Upper lobe of right lung (tissue), 1 donor: ENCODE measurements at regions of chr9 and their contacts with region 1.

Region 1: DNA sequence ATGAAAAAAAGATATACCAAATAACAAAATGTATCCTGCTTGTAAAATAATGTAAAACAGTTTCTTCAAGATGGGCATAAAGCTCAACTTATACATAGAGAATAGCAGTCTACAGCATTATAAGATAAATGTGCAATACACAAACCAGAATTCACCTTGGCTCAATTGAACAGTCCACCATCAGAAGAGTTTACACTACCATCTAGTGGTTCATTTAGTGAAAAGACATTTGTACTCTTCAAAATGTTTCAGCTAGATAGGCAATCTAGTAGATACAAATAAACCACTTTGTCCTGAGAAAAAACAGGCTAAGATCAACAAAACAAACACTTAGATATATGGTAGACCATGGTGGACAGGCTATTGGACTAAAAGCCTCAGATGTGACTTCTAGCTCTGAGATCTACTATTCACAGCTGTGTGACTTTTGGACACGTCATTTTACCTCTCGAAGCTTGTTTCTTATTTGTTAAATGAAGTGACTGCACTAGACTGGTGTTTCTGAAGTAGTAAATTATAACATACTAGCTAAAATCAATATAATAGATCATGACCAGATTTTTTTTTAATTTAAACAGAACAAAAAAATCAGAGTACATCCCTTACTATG is 22.1 kb upstream of the TPD52L3 start:
- DNase-seq: no peak
- ATAC-seq: peak; percentile 77
- H3K4me3 ChIP-seq: no peak overlapping the region
- H3K27ac ChIP-seq: no peak overlapping the region
- H3K4me1 ChIP-seq: no peaks in the 10 kb centered on the region
- H3K27me3 ChIP-seq: no peaks in the 10 kb centered on the region
- CTCF ChIP-seq: peak; percentile 59

Region 2: GRCh38 chr9:6090317-6090716 is 215.7 kb before region 1 on chr9:
- intact Hi-C with region 1: no loop called
- DNase-seq: no peak
- ATAC-seq: no peak
- H3K4me3 ChIP-seq: no peak overlapping the region
- H3K27ac ChIP-seq: no peak overlapping the region
- H3K4me1 ChIP-seq: no peaks in the 10 kb centered on the region
- H3K27me3 ChIP-seq: no peaks in the 10 kb centered on the region
- CTCF ChIP-seq: no peak

Region 3: DNA sequence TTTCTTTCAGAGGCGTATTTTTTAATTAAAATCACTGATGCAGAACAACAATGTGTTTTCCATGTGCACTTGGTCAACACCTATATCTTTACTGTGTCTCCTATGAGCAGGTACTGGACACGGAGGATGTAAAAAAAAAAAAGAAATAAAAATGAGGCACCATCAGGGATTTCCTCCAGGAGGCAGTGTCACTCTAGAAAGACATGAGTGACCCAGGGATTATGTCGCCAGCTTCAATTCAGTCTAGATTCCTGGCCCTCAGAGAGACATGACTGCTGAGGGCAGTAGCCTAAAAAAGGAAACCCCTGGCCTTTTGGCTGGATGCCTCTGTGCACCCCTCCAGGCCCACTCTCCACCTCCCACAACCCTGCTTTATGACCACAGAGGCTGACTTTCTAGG is 108.7 kb before region 1 on chr9:
- intact Hi-C with region 1: loop called (anchors 10 kb)
- DNase-seq: no peak
- ATAC-seq: peak; percentile 72
- H3K4me3 ChIP-seq: no peak overlapping the region
- H3K27ac ChIP-seq: no peak overlapping the region
- H3K4me1 ChIP-seq: peaks cover 17% of the 10 kb centered on the region
- H3K27me3 ChIP-seq: no peaks in the 10 kb centered on the region
- CTCF ChIP-seq: peak; percentile 54